Activated CD4-positive, alpha-beta T cell treated with anti-CD3 and anti-CD28 coated beads for 36 hours (primary cell): ENCODE measurements at regions of chr1 and their contacts with region 1.

Region 1: GRCh38 chr1:115807723-115808122 is 33.2 kb downstream of the NHLH2 start:
- DNase-seq: peak; percentile 60
- ATAC-seq: peak; percentile 60
- H3K4me3 Mint-ChIP-seq: no peak overlapping the region
- H3K27ac Mint-ChIP-seq: no peak overlapping the region
- H3K4me1 Mint-ChIP-seq: no peaks in the 10 kb centered on the region
- H3K27me3 Mint-ChIP-seq: peaks cover 12% of the 10 kb centered on the region

Region 2: DNA sequence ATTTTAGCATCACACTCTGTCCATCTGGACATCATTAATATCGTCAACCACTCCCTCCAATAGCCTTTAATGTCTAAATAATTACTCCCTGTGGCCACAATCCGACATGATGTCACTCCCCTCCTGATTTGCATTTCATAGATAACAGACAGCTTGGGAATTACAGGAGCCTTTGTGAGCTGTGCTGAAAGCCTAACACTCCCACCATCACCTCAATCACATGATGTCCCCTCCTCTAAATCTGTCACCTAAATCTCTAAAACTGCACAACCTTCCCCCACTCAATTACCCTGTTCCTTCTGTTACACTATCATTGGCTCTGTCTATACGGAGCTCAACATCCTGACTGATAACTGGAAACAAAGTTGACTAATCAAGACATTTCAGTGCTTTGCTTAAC is 18.9 kb after region 1 on chr1:
- CTCF ChIA-PET with region 1: no interaction called
- POLR2A ChIA-PET with region 1: no interaction called
- intact Hi-C with region 1: no loop called
- DNase-seq: no peak
- ATAC-seq: no peak
- H3K4me3 Mint-ChIP-seq: no peak overlapping the region
- H3K27ac Mint-ChIP-seq: no peak overlapping the region
- H3K4me1 Mint-ChIP-seq: peaks cover 7% of the 10 kb centered on the region
- H3K27me3 Mint-ChIP-seq: peaks cover 46% of the 10 kb centered on the region

Region 3: DNA sequence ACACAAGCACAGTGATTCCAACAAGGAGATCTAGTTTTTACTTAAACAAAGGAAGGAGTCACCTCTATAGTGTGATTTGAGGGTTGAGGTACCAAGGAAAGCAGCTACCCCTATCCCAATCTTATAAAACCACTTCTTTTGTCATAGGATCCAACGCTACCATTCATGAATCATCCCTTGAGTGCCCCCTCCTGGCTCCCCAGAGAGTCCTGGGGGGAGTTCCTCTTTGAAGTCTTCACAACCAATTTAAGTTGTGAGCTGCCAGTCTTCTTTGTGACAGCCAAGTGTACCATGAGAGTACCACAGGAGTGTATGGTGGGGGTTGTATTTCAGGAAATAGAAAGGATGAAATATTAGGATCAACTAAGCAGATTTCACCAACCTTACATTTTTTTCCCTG is 72.3 kb after region 1 on chr1:
- CTCF ChIA-PET with region 1: interaction called, 3 read pairs
- POLR2A ChIA-PET with region 1: no interaction called
- intact Hi-C with region 1: loop called in 1 of 2 experiments (anchors 5 kb)
- DNase-seq: no peak
- ATAC-seq: no peak
- H3K4me3 Mint-ChIP-seq: no peak overlapping the region
- H3K27ac Mint-ChIP-seq: no peak overlapping the region
- H3K4me1 Mint-ChIP-seq: no peaks in the 10 kb centered on the region
- H3K27me3 Mint-ChIP-seq: peaks cover 15% of the 10 kb centered on the region

Region 4: GRCh38 chr1:115980998-115981993 is 173.6 kb after region 1 on chr1:
- CTCF ChIA-PET with region 1: interaction called, 10 read pairs
- POLR2A ChIA-PET with region 1: no interaction called
- intact Hi-C with region 1: loop called (anchors 1 kb)
- DNase-seq: peak; percentile 17
- ATAC-seq: no peak
- H3K4me3 Mint-ChIP-seq: no peak overlapping the region
- H3K27ac Mint-ChIP-seq: no peak overlapping the region
- H3K4me1 Mint-ChIP-seq: no peaks in the 10 kb centered on the region
- H3K27me3 Mint-ChIP-seq: peaks cover 24% of the 10 kb centered on the region

Region 5: GRCh38 chr1:116020668-116021275 is 213.0 kb after region 1 on chr1:
- CTCF ChIA-PET with region 1: interaction called, 10 read pairs
- POLR2A ChIA-PET with region 1: no interaction called
- intact Hi-C with region 1: loop called (anchors 2 to 5 kb)
- DNase-seq: peak; percentile 68
- ATAC-seq: peak; percentile 68
- H3K4me3 Mint-ChIP-seq: no peak overlapping the region
- H3K27ac Mint-ChIP-seq: no peak overlapping the region
- H3K4me1 Mint-ChIP-seq: no peaks in the 10 kb centered on the region
- H3K27me3 Mint-ChIP-seq: no peaks in the 10 kb centered on the region

Region 6: GRCh38 chr1:116498789-116499628 is 691.3 kb after region 1 on chr1:
- CTCF ChIA-PET with region 1: no interaction called
- POLR2A ChIA-PET with region 1: no interaction called
- intact Hi-C with region 1: loop called in 1 of 2 experiments (anchors 10 kb)
- DNase-seq: peak; percentile 61
- ATAC-seq: peak; percentile 73
- H3K4me3 Mint-ChIP-seq: no peak overlapping the region
- H3K27ac Mint-ChIP-seq: no peak overlapping the region
- H3K4me1 Mint-ChIP-seq: peaks cover 24% of the 10 kb centered on the region
- H3K27me3 Mint-ChIP-seq: no peaks in the 10 kb centered on the region